ENCODE measurements at regions of chr17 and their contacts with region 1.

Region 1: DNA sequence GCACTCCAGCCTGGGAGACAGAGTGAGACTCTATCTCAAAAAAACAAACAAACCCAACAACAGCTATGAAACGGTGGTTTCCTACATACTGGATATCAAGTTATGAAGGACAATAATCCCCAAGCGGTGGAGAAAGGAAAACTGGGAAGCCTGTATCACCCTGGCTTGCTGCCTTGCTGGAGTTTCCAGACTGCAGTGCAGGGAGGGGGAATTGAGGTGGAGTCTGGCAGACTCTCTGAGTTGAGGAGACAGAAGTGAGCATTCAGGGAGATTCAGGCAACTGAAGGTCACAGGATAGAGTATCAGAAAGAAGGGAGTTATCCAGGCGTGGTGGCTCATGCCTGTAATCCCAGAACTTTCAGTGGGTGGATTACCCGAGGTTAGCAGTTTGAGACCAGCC is 11.9 kb downstream of the QRICH2 start:
- DNase-seq: no peak
- ATAC-seq: no peak
- H3K4me3 ChIP-seq: no peak overlapping the region
- H3K27ac ChIP-seq: no peak overlapping the region
- H3K4me1 ChIP-seq: no peaks in the 10 kb centered on the region
- H3K27me3 ChIP-seq: no peaks in the 10 kb centered on the region
- CTCF ChIP-seq: no peak
- POLR2A ChIP-seq: no peak

Region 2: DNA sequence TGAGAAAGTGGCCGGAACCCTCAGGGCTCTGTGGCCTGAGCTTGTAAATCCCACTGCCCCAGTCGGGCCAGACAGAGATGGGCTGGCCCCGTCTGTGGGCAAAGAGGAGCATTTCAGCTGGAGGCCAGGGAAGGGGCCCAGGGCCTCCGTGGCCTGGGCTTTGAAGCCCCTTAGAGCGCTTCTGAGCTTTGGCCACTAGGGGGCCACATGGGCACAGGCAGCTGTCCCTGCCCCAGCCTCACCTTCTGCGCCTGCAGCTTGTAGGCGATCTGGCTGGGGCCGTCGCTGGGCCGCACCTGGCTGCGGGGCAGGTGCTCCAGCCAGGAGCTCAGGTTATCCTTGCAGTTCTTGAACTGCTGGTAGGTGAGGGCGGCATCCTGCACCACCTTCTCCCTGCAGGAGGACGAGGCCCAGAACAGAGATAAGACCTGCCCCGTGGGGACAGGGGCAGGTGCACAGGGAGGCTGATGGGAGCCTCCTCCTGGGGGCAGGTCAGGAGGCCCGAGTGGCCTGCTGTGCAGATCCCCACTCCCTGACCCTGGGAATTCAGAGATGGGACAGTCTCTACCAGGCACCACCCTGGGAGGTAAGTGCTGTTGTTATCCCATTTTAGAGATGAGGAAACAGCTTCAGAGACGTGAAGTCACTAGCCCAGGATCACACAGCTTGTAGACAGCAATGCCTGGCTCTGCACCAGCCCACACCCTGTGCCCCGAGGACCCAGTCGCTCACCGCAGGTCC is 281.8 kb before region 1 on chr17:
- in situ Hi-C with region 1: loop called in 1 of 4 experiments (anchors 10 kb)
- intact Hi-C with region 1: no loop called
- DNase-seq: peak; percentile 24 to 52
- ATAC-seq: peak; percentile 69 to 83
- H3K4me3 ChIP-seq: no peak overlapping the region
- H3K27ac ChIP-seq: no peak overlapping the region
- H3K4me1 ChIP-seq: peaks cover 0 to 3% of the 10 kb centered on the region in 2 donors
- H3K27me3 ChIP-seq: no peaks in the 10 kb centered on the region
- CTCF ChIP-seq: peak; percentile 74 to 97 (median 88)
- POLR2A ChIP-seq: no peak

Region 3: DNA sequence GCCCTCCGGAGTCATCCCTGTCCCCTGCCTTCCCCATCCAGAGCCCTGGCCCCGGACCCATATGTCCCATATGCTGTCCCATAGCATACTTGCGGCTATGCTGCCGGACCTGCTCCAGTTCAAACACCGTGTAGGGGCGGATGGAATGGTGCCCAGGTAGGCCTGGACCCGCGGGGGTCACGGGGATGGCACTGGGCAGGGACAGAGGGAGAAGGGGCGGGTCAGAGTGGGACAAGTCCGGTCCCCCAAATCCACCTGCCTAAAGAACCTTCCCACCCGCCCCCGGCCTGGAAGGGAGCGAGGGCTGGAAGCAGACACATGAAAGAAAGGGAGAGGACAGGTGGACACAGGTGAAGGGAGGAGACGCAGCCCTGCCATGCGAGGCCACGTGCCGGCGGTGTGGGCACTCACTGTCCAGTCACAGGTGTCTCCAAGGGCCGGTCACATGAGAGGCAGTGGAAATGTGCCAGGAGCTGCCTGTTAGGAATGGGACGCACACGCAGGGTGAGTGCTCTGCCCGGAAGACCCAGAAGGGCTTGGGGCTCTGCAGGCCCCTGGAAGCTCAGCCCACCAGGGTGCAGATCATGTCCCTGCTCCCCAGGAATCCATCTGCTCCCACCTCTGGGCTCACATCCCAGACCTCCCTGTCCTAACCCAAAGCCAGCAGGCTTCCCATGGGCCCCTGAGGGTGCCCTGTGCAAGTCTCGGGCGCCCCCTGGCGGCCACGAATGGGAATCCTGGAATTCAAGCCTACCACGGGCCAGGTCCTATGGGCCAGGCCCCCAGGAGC is 17.0 kb before region 1 on chr17:
- in situ Hi-C with region 1: no loop called
- intact Hi-C with region 1: no loop called
- DNase-seq: peak; percentile 82 to 89
- ATAC-seq: peak; percentile 50 to 70
- H3K4me3 ChIP-seq: no peak overlapping the region
- H3K27ac ChIP-seq: peak overlapping the region; percentile 54 to 79 (median 73)
- H3K4me1 ChIP-seq: peaks cover 20 to 32% of the 10 kb centered on the region in 2 donors
- H3K27me3 ChIP-seq: no peaks in the 10 kb centered on the region
- CTCF ChIP-seq: peak; percentile 96 to 100 (median 99)
- POLR2A ChIP-seq: no peak